ENCODE measurements at regions of chr11 and their contacts with region 1.

Region 1: DNA sequence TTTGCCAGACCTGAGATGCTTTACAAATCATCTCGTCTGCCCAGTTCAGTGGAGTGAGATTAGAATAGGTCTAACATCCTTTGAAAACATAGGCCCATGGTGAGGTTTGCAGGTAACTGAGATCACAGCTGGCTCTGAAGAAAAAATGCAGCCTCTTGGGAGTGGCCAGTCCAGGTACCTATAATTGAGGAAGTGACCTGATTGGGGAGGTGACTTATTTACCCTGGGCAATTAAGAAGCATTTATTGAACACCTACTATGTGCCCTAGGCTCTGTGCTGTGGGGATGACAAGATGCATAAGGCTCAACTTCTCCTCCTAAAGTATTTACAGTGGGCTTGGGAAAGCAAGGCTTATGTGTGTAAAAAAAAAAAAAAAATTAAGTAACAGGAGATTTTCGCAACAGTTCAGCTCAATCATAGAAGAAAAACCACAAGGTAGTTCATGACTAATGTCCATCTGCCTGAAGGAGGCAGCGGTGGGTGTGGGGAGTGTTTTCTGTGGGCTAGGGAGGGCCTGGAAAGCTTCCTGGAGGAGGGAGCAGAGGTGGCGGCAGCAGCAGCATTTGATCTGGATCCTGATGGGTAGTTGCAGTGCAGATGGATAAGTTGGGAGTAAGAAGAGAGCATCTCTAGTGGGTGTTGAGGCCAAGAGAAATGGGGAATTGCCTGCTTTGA is 16.1 kb downstream of the MICAL2 start:
- DNase-seq: peak in 1 of 4 experiments; percentile 36
- ATAC-seq: peak; percentile 13; the same call in 1 of the 3 replicates
- H3K4me3 ChIP-seq: no peak overlapping the region
- H3K27ac ChIP-seq: no peak overlapping the region; the same call in 2 of the 3 replicates
- H3K4me1 ChIP-seq: peaks cover 27 to 55% of the 10 kb centered on the region in 2 experiments
- H3K27me3 ChIP-seq: no peaks in the 10 kb centered on the region
- CTCF ChIP-seq: peak in 2 of 3 experiments; percentile 14 to 32; a peak in 2 of 6 replicates
- EP300 ChIP-seq: no peak
- POLR2A ChIP-seq: no peak
- RAD21 ChIP-seq: peak in 1 of 2 experiments; percentile 26; a peak in 1 of 4 replicates

Region 2: DNA sequence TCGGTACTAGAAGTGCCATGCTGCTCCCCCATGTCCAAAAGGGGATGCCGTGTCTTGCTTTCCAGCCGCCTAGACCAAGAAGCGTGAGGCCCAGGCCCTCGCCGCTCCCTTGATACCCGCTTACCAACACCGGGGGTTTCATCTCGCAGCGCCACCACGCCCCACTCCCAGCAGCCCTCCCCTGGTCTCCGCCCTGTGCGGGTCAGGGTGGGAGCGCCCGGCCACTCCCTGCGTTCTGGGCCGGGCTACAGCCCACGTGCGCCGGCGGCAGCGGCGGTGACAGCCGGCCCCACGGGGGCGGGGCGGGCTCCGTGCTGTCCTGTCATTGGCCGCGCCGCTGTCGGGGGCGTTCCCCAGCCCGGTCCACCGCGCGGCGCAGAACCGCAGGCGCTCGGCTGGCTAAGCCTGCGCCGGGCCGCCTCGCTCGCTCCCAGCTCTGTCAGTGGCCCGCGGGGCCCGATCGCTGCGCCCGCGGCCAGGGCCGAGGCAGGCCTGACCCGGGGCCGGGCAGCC is 16.2 kb before region 1 on chr11 and contains the start of gene MICAL2:
- CTCF ChIA-PET with region 1: no interaction called
- POLR2A ChIA-PET with region 1: interaction called, 11 read pairs
- in situ Hi-C with region 1: no loop called
- intact Hi-C with region 1: no loop called
- DNase-seq: peak; percentile 95 to 98 (median 98)
- ATAC-seq: peak; percentile 96
- H3K4me3 ChIP-seq: peak within 1 kb of the TSS; percentile 53
- H3K27ac ChIP-seq: peak within 1 kb of the TSS; percentile 53
- H3K4me1 ChIP-seq: peaks cover 41 to 45% of the 10 kb centered on the region in 2 experiments
- H3K27me3 ChIP-seq: no peaks in the 10 kb centered on the region
- CTCF ChIP-seq: no peak
- EP300 ChIP-seq: no peak
- POLR2A ChIP-seq: peak; percentile 57
- RAD21 ChIP-seq: no peak
- polyA plus RNA-seq, gene MICAL2: 4.7 to 5.9 TPM

Region 3: DNA sequence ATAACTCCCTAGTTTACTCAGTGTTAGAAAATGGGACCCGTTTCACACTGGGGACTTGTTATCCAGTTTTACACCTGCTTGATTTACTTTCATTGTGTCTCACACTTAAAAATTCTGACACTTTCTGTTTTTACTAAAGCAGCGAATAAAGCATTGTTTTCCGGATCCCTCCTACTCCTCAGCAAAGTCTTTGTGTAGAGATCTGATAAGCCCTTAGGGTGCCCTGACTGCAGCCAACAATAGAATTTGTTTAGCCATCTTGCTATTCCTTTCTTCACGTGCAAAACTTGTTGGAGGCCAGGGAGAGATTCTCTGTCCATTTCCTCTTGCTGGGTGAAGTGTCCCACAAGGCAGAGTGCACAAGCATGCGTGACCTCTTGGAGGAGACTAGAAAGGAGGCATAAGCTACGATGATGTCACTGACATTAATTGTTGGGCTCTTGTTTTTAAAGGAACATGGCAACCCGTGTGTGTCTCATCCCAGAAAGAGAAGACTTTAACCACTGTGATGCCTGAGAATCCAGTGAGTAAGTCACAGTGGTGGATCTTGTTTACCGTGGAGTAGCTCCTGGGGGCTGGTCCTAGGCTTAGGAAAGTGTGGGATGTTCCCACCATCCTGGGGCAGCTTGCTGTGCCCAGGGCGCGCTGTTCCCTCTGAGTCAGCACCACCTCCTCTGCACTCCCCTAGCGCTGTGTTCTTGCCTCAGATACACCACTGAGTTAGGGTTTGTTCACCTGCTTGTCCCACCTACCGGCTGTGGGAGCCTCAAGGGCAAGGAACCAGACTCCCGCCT is 11.7 kb after region 1 on chr11:
- CTCF ChIA-PET with region 1: no interaction called
- POLR2A ChIA-PET with region 1: interaction called, 37 read pairs
- in situ Hi-C with region 1: no loop called
- intact Hi-C with region 1: no loop called
- DNase-seq: no peak
- ATAC-seq: peak; percentile 25
- H3K4me3 ChIP-seq: no peak overlapping the region
- H3K27ac ChIP-seq: no peak overlapping the region
- H3K4me1 ChIP-seq: peaks cover 12 to 28% of the 10 kb centered on the region in 2 experiments; a peak in 4 of 5 replicates
- H3K27me3 ChIP-seq: no peaks in the 10 kb centered on the region
- CTCF ChIP-seq: no peak
- EP300 ChIP-seq: no peak
- POLR2A ChIP-seq: no peak
- RAD21 ChIP-seq: 0 out of 4 replicates have a peak, but pooled peaks of 1 of the 2 experiments have one; percentile 9